ENCODE measurements at regions of chr12 and their contacts with region 1.

Region 1: GRCh38 chr12:583234-583869 is 79.9 kb downstream of the NINJ2 start:
- DNase-seq: peak; percentile 71
- ATAC-seq: peak; percentile 88 to 95

Region 2: GRCh38 chr12:642633-643474 is 59.5 kb after region 1 on chr12:
- intact Hi-C with region 1: loop called in 1 of 2 experiments (anchors 10 kb)
- DNase-seq: peak; percentile 87
- ATAC-seq: peak; percentile 78 to 89

Region 3: GRCh38 chr12:810671-811415 is 227.5 kb after region 1 on chr12:
- intact Hi-C with region 1: no loop called
- DNase-seq: no peak
- ATAC-seq: no peak

Measured in left cardiac atrium (tissue), 4 donors.